Activated naive CD4-positive, alpha-beta T cell treated with anti-CD3 and anti-CD28 coated beads, Interleukin-2, amount 10 ng/mL, durations not matched to agents 7 days and 5 days (primary cell): ENCODE measurements at regions of chr1 and their contacts with region 1.

Region 1: DNA sequence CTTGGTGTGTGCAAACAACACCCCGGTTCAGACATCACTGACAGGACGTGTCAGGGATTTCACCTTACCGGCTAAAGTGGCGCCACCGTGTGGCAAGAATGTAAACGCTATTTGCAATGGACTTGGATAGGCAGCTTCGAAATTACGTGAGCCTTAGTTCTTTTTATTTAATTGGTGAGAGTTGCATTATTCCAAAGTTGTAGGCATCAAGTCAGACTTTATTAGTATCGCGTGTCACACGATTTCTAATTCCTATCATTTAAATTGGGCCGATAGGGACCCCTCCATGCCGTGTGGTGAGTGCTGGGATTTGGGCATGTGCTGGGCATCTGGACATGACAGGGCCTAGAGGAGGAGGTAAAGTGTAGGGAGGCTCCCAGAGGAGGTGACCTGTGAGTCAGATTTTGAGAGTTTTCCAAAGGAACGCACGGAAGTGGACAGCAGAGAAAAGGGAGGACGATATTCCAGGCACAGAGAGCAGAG is 14.5 kb upstream of the CPT2 start:
- DNase-seq: peak; percentile 89
- H3K4me3 Mint-ChIP-seq: no peak overlapping the region
- H3K27ac Mint-ChIP-seq: no peak overlapping the region
- H3K4me1 Mint-ChIP-seq: no peaks in the 10 kb centered on the region
- H3K27me3 Mint-ChIP-seq: peaks cover 30% of the 10 kb centered on the region

Region 2: GRCh38 chr1:52904927-52905698 is 277.0 kb before region 1 on chr1:
- CTCF ChIA-PET with region 1: interaction called, 18 read pairs
- DNase-seq: peak; percentile 59
- H3K4me3 Mint-ChIP-seq: no peak overlapping the region
- H3K27ac Mint-ChIP-seq: peak overlapping the region; percentile 37
- H3K4me1 Mint-ChIP-seq: peaks cover 2% of the 10 kb centered on the region
- H3K27me3 Mint-ChIP-seq: no peaks in the 10 kb centered on the region

Region 3: DNA sequence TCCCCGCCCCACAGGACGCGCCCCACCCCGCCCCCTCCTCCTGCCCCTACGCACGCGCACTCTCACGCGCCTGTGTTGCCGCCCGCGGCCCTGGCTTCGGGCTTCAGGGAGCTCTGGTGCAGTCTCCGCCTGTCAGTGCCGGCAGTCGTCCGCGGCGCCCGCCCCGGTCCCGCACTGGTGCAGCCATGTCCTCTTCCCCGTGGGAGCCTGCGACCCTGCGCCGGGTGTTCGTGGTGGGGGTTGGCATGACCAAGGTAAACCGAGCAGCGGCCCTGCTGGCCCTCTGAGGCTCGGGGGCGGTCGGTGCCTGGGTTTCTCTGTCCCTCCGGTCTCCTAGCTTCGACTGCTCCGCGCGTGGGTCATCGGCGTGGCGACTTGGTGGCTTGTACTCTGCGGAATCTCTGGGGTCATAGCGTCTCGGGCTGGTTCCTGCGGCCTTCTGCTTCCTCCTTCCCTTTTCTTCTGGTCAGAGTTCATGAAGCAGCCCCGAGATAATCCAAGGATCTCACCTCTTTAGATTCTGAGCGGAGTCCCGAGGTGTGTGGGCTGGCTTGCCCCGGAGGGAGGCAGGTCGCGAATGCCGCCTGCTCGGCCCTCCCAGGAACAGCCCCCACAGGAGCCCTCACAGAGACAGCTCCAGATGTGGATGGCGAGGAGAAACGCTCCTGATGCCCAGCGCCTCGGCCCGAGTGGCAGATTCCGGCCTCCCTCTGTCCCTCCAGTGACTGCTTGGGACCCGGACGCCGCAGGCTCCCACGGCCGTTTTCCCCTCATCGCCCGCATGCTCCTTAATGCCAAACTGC is 254.7 kb before region 1 on chr1 and contains the start of gene SCP2:
- CTCF ChIA-PET with region 1: interaction called, 14 read pairs
- DNase-seq: peak; percentile 86
- H3K4me3 Mint-ChIP-seq: peak within 1 kb of the TSS; percentile 75
- H3K27ac Mint-ChIP-seq: no peak within 1 kb of the TSS
- H3K4me1 Mint-ChIP-seq: peaks cover 17% of the 10 kb centered on the region
- H3K27me3 Mint-ChIP-seq: peaks cover 20% of the 10 kb centered on the region

Region 4: GRCh38 chr1:53196015-53196484 is 13.9 kb after region 1 on chr1:
- CTCF ChIA-PET with region 1: interaction called, 15 read pairs
- DNase-seq: no peak
- H3K4me3 Mint-ChIP-seq: peak overlapping the region; percentile 98
- H3K27ac Mint-ChIP-seq: peak overlapping the region; percentile 85
- H3K4me1 Mint-ChIP-seq: peaks cover 31% of the 10 kb centered on the region
- H3K27me3 Mint-ChIP-seq: peaks cover under 1% of the 10 kb centered on the region